ENCODE measurements at regions of chr2 and their contacts with region 1.

Region 1: DNA sequence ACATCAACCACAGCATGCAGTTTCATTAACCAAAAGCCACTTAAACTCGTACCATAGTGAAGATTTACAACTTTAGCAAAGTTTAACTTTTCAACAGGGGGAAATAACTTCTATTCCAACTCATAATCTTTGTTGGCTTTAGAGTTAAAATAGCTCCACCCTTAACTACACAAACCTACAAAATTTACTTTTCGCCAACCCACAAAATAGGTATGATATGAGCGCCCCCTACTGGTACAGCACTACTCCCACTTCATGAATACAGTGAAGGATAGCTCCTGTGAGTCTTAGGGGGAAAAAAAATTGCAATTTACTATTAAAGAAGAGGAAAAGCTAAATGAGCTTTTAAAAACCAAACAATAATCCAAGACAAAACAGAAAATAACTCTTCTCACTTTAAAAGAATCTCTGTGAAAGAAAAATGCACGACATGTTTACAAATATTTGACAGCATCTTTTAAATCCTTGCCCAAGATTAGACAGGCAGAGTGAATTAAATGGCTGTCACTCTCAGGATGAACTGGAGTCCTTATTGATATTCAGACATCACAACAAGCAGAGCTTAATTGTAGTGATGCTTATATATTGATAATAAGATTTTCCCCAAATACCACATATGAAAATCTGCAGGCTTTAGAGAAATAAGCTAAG is 32.2 kb downstream of the TMEFF2 start:
- DNase-seq: peak; percentile 72 to 91
- H3K4me3 ChIP-seq: peak overlapping the region in 2 of 4 donors; percentile 14 to 20
- H3K27ac ChIP-seq: no peak overlapping the region
- H3K4me1 ChIP-seq: peaks cover 0 to 13% (median 5%) of the 10 kb centered on the region in 4 donors
- H3K27me3 ChIP-seq: no peaks in the 10 kb centered on the region
- CTCF ChIP-seq: peak in 5 of 7 experiments; percentile 83 to 97 (median 91)
- EP300 ChIP-seq: no peak
- POLR2A ChIP-seq: no peak

Region 2: DNA sequence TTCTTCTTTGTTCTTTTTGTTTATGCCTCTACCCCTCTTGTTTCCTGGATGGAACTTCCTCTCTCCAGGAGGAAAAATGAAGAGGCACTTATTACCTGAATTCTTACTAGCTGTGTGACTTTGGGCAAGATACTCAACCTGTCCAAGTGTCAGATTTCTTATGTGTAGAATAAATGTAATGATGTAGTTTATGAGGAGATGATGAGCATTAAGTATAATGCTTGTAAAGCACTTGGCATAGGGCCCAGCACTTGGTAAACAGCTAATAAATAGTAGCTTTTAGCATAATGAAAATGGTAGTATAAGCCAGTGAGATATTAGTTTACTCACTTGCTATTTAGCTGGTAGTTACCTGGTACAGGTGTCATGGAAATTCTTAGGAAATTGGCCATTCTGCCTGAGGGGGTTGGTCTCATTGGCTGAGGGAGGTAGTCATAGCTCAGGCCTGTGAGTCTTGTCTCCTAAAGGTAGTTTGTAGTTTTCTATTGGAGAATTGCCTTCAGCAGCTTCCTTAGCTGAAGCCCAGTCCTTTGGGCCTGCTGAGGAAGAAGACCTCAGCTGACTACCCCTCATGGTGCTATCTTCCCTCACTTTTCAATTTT is 618.0 kb before region 1 on chr2:
- intact Hi-C with region 1: loop called (anchors 10 kb)
- DNase-seq: no peak
- H3K4me3 ChIP-seq: no peak overlapping the region
- H3K27ac ChIP-seq: no peak overlapping the region
- H3K4me1 ChIP-seq: no peaks in the 10 kb centered on the region
- H3K27me3 ChIP-seq: no peaks in the 10 kb centered on the region
- CTCF ChIP-seq: no peak
- EP300 ChIP-seq: no peak
- POLR2A ChIP-seq: no peak

Region 3: GRCh38 chr2:191811807-191812602 is 350.5 kb before region 1 on chr2:
- intact Hi-C with region 1: loop called (anchors 5 kb)
- DNase-seq: peak; percentile 68 to 88
- H3K4me3 ChIP-seq: no peak overlapping the region
- H3K27ac ChIP-seq: no peak overlapping the region
- H3K4me1 ChIP-seq: peaks cover 0 to 11% (median 2%) of the 10 kb centered on the region in 4 donors
- H3K27me3 ChIP-seq: no peaks in the 10 kb centered on the region
- CTCF ChIP-seq: peak in 5 of 7 experiments; percentile 41 to 80 (median 69)
- EP300 ChIP-seq: no peak
- POLR2A ChIP-seq: no peak

Measured in stomach (tissue), 19 donors.